ENCODE measurements at regions of chr20 and their contacts with region 1.

Region 1: GRCh38 chr20:1734269-1734858 is 76.8 kb upstream of the SIRPG start:
- DNase-seq: peak; percentile 57
- H3K4me3 Mint-ChIP-seq: no peak overlapping the region
- H3K27ac Mint-ChIP-seq: no peak overlapping the region
- H3K4me1 Mint-ChIP-seq: peaks cover 41% of the 10 kb centered on the region
- H3K27me3 Mint-ChIP-seq: peaks cover 16% of the 10 kb centered on the region

Region 2: DNA sequence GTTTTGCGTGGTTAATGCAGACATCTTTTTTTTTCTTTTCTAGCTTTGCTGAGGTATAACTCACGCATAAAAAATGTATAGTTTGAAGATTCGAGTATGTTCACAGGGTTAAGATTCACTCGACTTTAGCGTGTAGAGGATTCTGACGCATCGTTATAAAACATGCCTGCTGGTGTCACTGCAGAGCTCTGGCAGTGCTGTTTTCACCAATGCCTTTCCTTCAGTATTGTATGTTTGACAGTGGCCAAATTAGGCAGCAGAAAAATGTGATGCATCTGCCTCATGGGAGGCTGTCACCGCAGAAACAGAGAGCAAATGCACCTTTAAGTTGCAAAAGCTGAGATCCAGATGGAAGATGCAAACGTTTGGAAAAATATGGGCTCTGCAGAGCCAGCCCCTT is 225.1 kb before region 1 on chr20:
- CTCF ChIA-PET with region 1: interaction called, 41 read pairs
- DNase-seq: peak; percentile 53
- H3K4me3 Mint-ChIP-seq: no peak overlapping the region
- H3K27ac Mint-ChIP-seq: no peak overlapping the region
- H3K4me1 Mint-ChIP-seq: no peaks in the 10 kb centered on the region
- H3K27me3 Mint-ChIP-seq: peaks cover 49% of the 10 kb centered on the region

Region 3: DNA sequence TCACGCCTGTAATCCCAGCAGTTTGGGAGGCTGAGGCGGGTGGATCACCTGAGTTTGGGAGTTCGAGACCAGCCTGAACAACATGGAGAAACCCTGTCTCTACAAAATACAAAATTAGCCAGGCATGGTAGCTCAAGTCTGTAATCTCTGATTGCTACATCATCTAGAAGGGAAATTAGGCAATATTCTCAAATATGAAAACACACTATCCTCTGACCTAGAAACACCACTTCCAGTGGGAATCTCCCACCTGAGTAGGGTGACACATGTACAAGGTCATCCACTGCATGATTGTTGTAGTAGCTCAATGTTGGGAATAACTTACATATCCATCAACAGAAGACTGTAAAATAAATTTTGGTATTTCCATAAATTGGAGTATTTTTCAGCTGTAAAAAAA is 157.7 kb before region 1 on chr20:
- CTCF ChIA-PET with region 1: interaction called, 13 read pairs
- DNase-seq: no peak
- H3K4me3 Mint-ChIP-seq: no peak overlapping the region
- H3K27ac Mint-ChIP-seq: peak overlapping the region; percentile 7
- H3K4me1 Mint-ChIP-seq: no peaks in the 10 kb centered on the region
- H3K27me3 Mint-ChIP-seq: no peaks in the 10 kb centered on the region

Region 4: DNA sequence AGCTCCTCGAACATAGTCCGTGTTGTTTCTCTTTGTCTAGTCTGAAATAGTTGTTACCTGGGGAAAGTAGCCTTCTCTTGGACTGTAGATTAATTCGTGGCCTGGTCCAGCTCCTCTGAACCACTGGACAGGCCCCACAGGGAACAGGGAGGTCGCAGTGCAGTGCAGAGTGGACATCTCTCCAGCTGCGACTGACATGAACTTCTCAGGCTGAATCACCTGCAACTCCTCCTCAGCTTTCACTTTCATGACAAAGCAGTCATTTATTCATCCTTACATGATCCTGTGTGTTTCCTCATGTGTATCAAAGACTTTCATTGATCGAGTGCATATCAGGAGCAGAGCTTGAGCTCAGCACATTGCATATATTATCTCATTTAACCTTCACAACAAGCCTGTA is 57.7 kb before region 1 on chr20:
- CTCF ChIA-PET with region 1: interaction called, 25 read pairs
- DNase-seq: no peak
- H3K4me3 Mint-ChIP-seq: peak overlapping the region; percentile 43
- H3K27ac Mint-ChIP-seq: peak overlapping the region; percentile 85
- H3K4me1 Mint-ChIP-seq: peaks cover 89% of the 10 kb centered on the region
- H3K27me3 Mint-ChIP-seq: no peaks in the 10 kb centered on the region

Region 5: GRCh38 chr20:1776681-1777475 is 42.5 kb after region 1 on chr20:
- CTCF ChIA-PET with region 1: interaction called, 13 read pairs
- DNase-seq: peak; percentile 87
- H3K4me3 Mint-ChIP-seq: peak overlapping the region; percentile 79
- H3K27ac Mint-ChIP-seq: no peak overlapping the region
- H3K4me1 Mint-ChIP-seq: peaks cover 14% of the 10 kb centered on the region
- H3K27me3 Mint-ChIP-seq: peaks cover 33% of the 10 kb centered on the region